AG04449 (cell line): ENCODE measurements at regions of chr2 and their contacts with region 1.

Region 1: GRCh38 chr2:71798266-71799012 is 345.1 kb downstream of the DYSF start:
- DNase-seq: no peak
- H3K4me3 ChIP-seq: no peak overlapping the region
- CTCF ChIP-seq: peak; percentile 81

Region 2: DNA sequence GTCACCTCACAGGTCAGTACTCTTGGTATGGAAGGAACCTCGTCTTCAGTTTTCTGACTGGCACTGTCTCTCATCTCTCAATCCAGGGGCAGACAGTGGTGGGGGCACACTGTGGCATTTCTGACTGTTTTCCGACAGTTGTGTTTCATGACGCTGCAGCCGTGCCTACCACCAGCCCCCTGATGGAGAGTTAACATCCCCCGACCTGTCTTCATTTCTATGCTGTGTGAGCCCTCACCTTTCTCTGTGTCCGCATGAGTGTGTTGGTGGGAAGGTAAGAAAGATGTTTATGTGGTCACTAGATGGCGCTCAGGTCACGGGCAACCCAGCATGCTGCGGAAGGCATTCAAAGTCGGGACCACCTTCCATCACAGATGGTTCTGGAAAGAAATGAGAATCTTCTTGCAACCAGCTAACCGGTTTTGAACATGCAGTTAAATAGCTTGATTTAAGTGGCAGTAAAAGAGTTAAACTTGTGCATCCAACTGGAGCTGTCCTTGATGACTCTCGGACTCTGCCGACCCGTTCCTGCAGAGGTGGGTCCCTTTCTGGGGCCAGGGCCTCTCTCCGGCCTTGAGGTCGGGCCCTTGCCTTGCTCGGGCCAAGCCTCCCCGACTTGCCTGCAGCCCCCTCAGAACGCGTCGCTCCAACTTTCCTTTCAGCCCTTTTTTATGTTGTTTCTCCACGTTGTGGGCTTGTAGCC is 252.7 kb before region 1 on chr2:
- CTCF ChIA-PET with region 1: interaction called, 226 read pairs
- POLR2A ChIA-PET with region 1: no interaction called
- DNase-seq: no peak
- H3K4me3 ChIP-seq: no peak overlapping the region
- CTCF ChIP-seq: peak; percentile 68

Region 3: GRCh38 chr2:71631411-71631931 is 167.0 kb before region 1 on chr2:
- CTCF ChIA-PET with region 1: interaction called, 11 read pairs
- POLR2A ChIA-PET with region 1: no interaction called
- DNase-seq: no peak
- H3K4me3 ChIP-seq: peak overlapping the region; percentile 39
- CTCF ChIP-seq: no peak

Region 4: GRCh38 chr2:71778936-71779773 is 19.3 kb before region 1 on chr2:
- CTCF ChIA-PET with region 1: interaction called, 196 read pairs
- POLR2A ChIA-PET with region 1: no interaction called
- DNase-seq: no peak
- H3K4me3 ChIP-seq: no peak overlapping the region
- CTCF ChIP-seq: peak; percentile 36

Region 5: GRCh38 chr2:71995067-71995665 is 196.7 kb after region 1 on chr2:
- CTCF ChIA-PET with region 1: interaction called, 208 read pairs
- POLR2A ChIA-PET with region 1: no interaction called
- DNase-seq: no peak
- H3K4me3 ChIP-seq: no peak overlapping the region
- CTCF ChIP-seq: peak; percentile 29

Region 6: DNA sequence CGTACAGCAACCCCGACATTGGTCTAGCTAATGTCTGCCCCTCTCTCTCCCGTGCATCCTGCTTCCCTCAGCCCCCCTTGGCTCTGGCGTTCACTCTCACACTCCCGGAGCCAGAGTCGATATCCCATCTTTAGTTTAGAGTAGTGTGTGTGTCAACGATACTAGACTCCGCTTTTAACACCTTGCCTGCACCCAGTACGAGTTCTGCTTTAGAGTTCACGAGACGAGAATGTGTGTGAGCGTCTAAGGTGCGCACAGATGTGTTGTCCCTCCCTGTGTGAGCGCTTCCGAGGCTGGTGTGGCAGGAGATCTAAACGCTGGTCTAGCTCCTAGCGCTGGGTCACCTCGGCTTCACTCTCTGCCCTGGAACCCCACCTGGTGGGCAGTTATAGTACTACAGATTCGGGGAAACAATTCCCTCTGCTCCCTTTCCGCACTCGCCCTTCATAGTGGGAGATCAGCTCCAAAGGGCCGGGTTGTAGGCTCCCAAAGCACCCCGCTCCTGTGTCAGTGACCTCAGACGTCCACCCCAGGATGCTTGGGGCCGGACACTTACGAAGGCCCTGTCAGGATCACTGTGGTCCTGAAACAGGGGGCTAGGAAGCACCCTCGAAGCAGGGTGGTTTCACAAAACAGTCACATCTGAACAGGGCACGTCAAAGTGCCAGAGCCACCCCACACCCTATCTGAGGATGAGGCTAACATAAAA is 351.9 kb after region 1 on chr2:
- CTCF ChIA-PET with region 1: interaction called, 322 read pairs
- POLR2A ChIA-PET with region 1: no interaction called
- DNase-seq: no peak
- H3K4me3 ChIP-seq: peak overlapping the region; percentile 34
- CTCF ChIP-seq: peak; percentile 73